Gastrocnemius medialis (tissue), 4 donors: ENCODE measurements at regions of chr4 and their contacts with region 1.

Region 1: DNA sequence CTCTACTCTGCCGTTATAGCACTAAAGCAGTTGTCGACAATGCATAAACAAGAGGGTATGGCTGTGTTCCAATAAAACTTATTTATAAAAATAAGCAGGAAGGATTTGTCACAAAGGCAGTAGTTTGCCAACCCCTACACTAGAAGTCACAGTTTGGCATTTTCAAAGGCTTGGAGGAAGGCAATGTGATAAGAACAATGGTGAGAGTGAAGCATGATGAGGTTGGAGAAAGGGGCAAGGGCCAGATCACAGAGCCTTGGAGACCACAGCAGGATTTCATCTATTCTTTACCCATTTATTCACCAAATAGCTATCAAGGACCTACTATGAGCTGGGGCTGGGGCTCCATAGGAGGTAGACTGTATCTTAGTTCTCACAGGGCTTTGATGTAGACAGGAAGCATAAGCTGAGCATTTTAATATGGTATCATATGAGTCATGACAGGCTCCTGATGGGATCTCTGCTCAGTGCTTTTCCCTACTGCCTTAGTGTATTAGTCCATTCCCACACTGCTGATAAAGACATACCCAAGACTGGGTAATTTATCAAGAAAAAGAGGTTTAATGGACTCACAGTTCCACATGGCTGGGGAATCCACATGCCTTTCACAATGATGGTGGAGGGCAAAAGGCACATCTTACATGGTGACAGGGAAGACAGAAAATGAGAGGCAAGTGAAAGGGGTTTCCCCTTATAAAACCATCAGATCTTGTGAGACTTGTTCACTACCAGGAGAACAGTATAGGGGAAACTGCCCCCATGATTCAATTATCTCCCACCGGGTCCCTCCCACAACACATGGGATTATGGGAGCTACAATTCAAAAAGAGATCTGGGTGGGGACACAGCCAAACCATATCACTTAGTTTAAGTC is 58.9 kb downstream of the PPM1K start:
- DNase-seq: no peak
- ATAC-seq: no peak
- H3K4me3 ChIP-seq: no peak overlapping the region
- H3K27ac ChIP-seq: no peak overlapping the region
- H3K4me1 ChIP-seq: peaks cover under 1 to 2% of the 10 kb centered on the region in 2 donors
- H3K27me3 ChIP-seq: no peaks in the 10 kb centered on the region
- CTCF ChIP-seq: no peak
- POLR2A ChIP-seq: no peak

Region 2: GRCh38 chr4:88275516-88275915 is 50.0 kb after region 1 on chr4:
- in situ Hi-C with region 1: loop called in 1 of 4 experiments (anchors 10 kb)
- intact Hi-C with region 1: no loop called
- DNase-seq: no peak
- ATAC-seq: no peak
- H3K4me3 ChIP-seq: no peak overlapping the region
- H3K27ac ChIP-seq: no peak overlapping the region
- H3K4me1 ChIP-seq: peaks cover 7 to 27% of the 10 kb centered on the region in 2 donors
- H3K27me3 ChIP-seq: no peaks in the 10 kb centered on the region
- CTCF ChIP-seq: no peak
- POLR2A ChIP-seq: no peak